Tibial artery (tissue), 4 donors: ENCODE measurements at regions of chrX and their contacts with region 1.

Region 1: GRCh38 chrX:65706041-65706828 is 38.8 kb downstream of the MSN start:
- DNase-seq: peak in 1 of 2 donors; percentile 26
- H3K4me3 ChIP-seq: no peak overlapping the region
- H3K27ac ChIP-seq: peak overlapping the region; percentile 76 to 81
- H3K4me1 ChIP-seq: peaks cover 0 to 77% (median 29%) of the 10 kb centered on the region in 4 donors
- H3K27me3 ChIP-seq: no peaks in the 10 kb centered on the region
- CTCF ChIP-seq: no peak

Region 2: GRCh38 chrX:65392284-65392683 is 314.0 kb before region 1 on chrX:
- intact Hi-C with region 1: no loop called
- DNase-seq: no peak
- H3K4me3 ChIP-seq: no peak overlapping the region
- H3K27ac ChIP-seq: no peak overlapping the region
- H3K4me1 ChIP-seq: no peaks in the 10 kb centered on the region
- H3K27me3 ChIP-seq: no peaks in the 10 kb centered on the region
- CTCF ChIP-seq: no peak

Region 3: DNA sequence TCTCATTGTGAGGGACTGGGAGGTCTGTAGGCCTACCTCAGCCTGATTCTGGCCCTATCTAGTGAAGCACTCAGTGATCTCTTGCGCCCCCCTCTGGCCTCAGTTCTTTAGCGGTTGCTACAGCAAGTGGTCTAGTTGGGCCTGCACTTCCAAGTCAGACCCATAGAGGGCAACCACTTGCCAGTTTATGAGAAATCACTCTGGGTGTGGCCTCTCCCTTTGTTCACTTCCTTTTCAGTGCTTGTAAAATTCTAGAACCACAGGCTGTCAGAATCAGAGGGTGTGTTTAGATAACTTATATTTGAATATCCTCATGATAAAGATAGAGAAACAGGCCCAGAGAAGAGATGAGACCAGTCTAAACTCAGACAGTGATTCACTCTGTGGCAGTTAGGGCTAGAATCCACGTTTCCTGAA is 110.8 kb before region 1 on chrX:
- intact Hi-C with region 1: loop called (anchors 2 kb)
- DNase-seq: peak; percentile 94 to 97
- H3K4me3 ChIP-seq: no peak overlapping the region
- H3K27ac ChIP-seq: peak overlapping the region; percentile 67 to 92
- H3K4me1 ChIP-seq: peaks cover 0 to 42% (median 18%) of the 10 kb centered on the region in 4 donors
- H3K27me3 ChIP-seq: no peaks in the 10 kb centered on the region
- CTCF ChIP-seq: peak; percentile 89 to 97

Region 4: GRCh38 chrX:65610040-65610439 is 96.2 kb before region 1 on chrX:
- intact Hi-C with region 1: no loop called
- DNase-seq: no peak
- H3K4me3 ChIP-seq: no peak overlapping the region
- H3K27ac ChIP-seq: no peak overlapping the region
- H3K4me1 ChIP-seq: no peaks in the 10 kb centered on the region
- H3K27me3 ChIP-seq: no peaks in the 10 kb centered on the region
- CTCF ChIP-seq: no peak

Region 5: GRCh38 chrX:65644621-65645270 is 61.5 kb before region 1 on chrX:
- intact Hi-C with region 1: loop called (anchors 10 kb)
- DNase-seq: peak; percentile 92 to 95
- H3K4me3 ChIP-seq: no peak overlapping the region
- H3K27ac ChIP-seq: peak overlapping the region; percentile 72 to 80
- H3K4me1 ChIP-seq: peaks cover 0 to 42% (median 25%) of the 10 kb centered on the region in 4 donors
- H3K27me3 ChIP-seq: no peaks in the 10 kb centered on the region
- CTCF ChIP-seq: no peak